ENCODE measurements at regions of chr4 and their contacts with region 1.

Region 1: GRCh38 chr4:155376387-155377268 is at the start of gene MAP9:
- DNase-seq: peak; percentile 73
- H3K4me3 ChIP-seq: peak within 1 kb of the TSS; percentile 62
- H3K27ac ChIP-seq: no peak within 1 kb of the TSS
- H3K4me1 ChIP-seq: no peaks in the 10 kb centered on the region
- H3K27me3 ChIP-seq: no peaks in the 10 kb centered on the region
- CTCF ChIP-seq: no peak
- total RNA-seq, gene MAP9: 2.3 to 6.4 TPM

Region 2: GRCh38 chr4:154807042-154807630 is 569.5 kb before region 1 on chr4:
- intact Hi-C with region 1: loop called (anchors 10 kb)
- DNase-seq: no peak
- H3K4me3 ChIP-seq: no peak overlapping the region
- H3K27ac ChIP-seq: no peak overlapping the region
- H3K4me1 ChIP-seq: no peaks in the 10 kb centered on the region
- H3K27me3 ChIP-seq: no peaks in the 10 kb centered on the region
- CTCF ChIP-seq: peak; percentile 29

Region 3: DNA sequence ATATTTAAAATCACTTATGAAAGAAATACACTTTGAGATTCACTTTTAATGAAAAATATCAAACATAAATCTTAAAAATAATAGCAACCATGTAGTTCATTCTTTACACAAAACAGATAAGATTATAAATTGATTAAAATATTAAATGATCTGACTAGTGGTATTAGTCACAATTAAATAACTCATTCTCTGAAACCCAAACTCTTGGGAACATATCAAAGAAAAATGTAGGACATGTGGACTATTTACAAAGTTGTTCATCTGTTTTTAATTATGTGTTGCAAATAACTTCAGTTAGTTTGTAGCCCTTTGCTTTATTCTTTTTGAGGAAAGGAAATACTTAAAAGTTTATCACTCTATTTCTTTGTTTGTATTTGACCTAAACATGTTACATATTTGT is 280.5 kb after region 1 on chr4:
- intact Hi-C with region 1: no loop called
- DNase-seq: no peak
- H3K4me3 ChIP-seq: no peak overlapping the region
- H3K27ac ChIP-seq: no peak overlapping the region
- H3K4me1 ChIP-seq: no peaks in the 10 kb centered on the region
- H3K27me3 ChIP-seq: no peaks in the 10 kb centered on the region
- CTCF ChIP-seq: no peak